ENCODE measurements at regions of chr1 and their contacts with region 1.

Region 1: DNA sequence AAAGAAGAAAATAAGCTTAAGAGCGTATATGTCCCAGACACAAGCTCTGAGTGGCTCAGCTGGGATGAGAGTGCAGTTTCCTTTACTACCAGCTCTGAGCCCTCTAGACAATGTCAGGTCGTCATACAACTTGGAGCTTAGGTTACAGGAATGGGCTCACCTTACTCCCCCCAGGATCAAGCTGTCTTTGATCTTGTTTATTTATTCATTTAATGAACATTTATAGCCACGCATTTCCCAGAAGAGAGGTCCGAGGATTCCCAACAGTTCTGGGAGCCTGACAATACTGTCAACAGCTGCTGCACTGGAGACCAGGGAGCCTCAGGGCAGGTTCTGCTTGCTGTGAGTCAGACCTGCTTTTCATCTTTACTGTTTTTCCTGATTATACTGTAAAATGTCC is 378.9 kb downstream of the PLPP3 start:
- DNase-seq: no peak
- ATAC-seq: no peak
- H3K4me3 ChIP-seq: no peak overlapping the region
- H3K27ac ChIP-seq: no peak overlapping the region
- H3K4me1 ChIP-seq: peaks cover 0 to 50% (median 21%) of the 10 kb centered on the region in 9 donors
- H3K27me3 ChIP-seq: no peaks in the 10 kb centered on the region
- CTCF ChIP-seq: no peak

Region 2: DNA sequence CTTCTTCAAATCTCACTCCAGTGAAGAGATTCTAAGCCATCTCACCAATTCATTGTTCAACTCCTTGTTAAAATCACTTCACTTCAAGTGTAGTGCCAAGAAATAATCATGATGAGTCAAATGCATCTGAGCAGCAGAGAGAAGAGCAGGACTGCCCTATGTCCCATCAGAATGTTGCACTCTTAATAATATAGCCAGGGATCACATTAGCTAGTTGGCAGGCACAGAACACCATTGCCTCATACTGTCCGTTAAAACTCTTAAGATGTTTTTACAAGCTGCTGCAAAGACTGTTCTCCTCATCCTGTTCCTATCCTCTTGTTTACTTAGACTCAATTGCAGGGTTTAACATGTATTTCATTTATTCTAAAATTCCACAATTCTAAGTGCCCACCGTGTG is 54.0 kb before region 1 on chr1:
- intact Hi-C with region 1: no loop called
- DNase-seq: no peak
- ATAC-seq: peak in 5 of 8 donors; percentile 27 to 69 (median 66)
- H3K4me3 ChIP-seq: no peak overlapping the region
- H3K27ac ChIP-seq: peak overlapping the region in 3 of 10 donors; percentile 0 to 19 (median 18)
- H3K4me1 ChIP-seq: peaks cover 0 to 38% (median 7%) of the 10 kb centered on the region in 9 donors
- H3K27me3 ChIP-seq: no peaks in the 10 kb centered on the region
- CTCF ChIP-seq: no peak

Region 3: GRCh38 chr1:56284928-56285327 is 84.5 kb after region 1 on chr1:
- intact Hi-C with region 1: loop called in 4 of 10 experiments (anchors 5 to 10 kb)
- DNase-seq: peak in 1 of 2 donors; percentile 23
- ATAC-seq: peak in 7 of 8 donors; percentile 64 to 86 (median 79)
- H3K4me3 ChIP-seq: no peak overlapping the region
- H3K27ac ChIP-seq: peak overlapping the region in 7 of 10 donors; percentile 5 to 73 (median 51)
- H3K4me1 ChIP-seq: peaks cover 0 to 35% (median 18%) of the 10 kb centered on the region in 9 donors
- H3K27me3 ChIP-seq: no peaks in the 10 kb centered on the region
- CTCF ChIP-seq: no peak